IMR-90 (cell line): ENCODE measurements at regions of chr19 and their contacts with region 1.

Region 1: GRCh38 chr19:31214086-31214485 is 135.2 kb downstream of the TSHZ3 start:
- DNase-seq: peak; percentile 100
- ATAC-seq: peak; percentile 95
- H3K4me3 ChIP-seq: no peak overlapping the region
- H3K27ac ChIP-seq: peak overlapping the region; percentile 90
- H3K4me1 ChIP-seq: peaks cover 14% of the 10 kb centered on the region
- H3K27me3 ChIP-seq: no peaks in the 10 kb centered on the region
- CTCF ChIP-seq: no peak
- POLR2A ChIP-seq: no peak; the same call in 1 of the 2 replicates
- RAD21 ChIP-seq: peak; percentile 41

Region 2: GRCh38 chr19:31139871-31140505 is 74.1 kb before region 1 on chr19:
- CTCF ChIA-PET with region 1: no interaction called
- POLR2A ChIA-PET with region 1: no interaction called
- dilution Hi-C with region 1: no loop called
- in situ Hi-C with region 1: no loop called
- intact Hi-C with region 1: loop called (anchors 2 kb)
- DNase-seq: peak; percentile 90
- ATAC-seq: peak; percentile 77
- H3K4me3 ChIP-seq: no peak overlapping the region
- H3K27ac ChIP-seq: peak overlapping the region; percentile 24
- H3K4me1 ChIP-seq: peaks cover 26% of the 10 kb centered on the region
- H3K27me3 ChIP-seq: no peaks in the 10 kb centered on the region
- CTCF ChIP-seq: no peak
- POLR2A ChIP-seq: no peak
- RAD21 ChIP-seq: no peak

Region 3: DNA sequence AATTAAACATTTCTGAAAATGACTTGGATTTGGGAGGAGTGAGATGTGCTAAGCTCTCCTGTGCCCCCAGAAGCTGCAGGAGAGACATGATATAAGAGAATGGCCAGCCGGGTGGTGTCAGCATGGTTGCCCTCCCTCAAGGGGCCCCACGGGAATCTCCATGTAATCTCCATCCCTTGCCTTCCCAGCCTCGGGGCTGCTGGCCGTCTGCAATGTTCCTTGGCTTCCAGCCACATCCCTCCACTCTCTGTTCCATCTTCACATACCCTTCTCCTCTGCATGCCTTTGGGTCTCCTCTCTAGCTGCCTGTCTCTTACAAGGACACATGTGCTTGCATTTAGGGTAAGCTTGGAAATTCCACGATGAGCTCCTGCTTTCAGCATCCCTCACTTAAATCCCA is 36.8 kb before region 1 on chr19:
- CTCF ChIA-PET with region 1: no interaction called
- POLR2A ChIA-PET with region 1: no interaction called
- dilution Hi-C with region 1: no loop called
- in situ Hi-C with region 1: no loop called
- intact Hi-C with region 1: no loop called
- DNase-seq: no peak
- ATAC-seq: no peak
- H3K4me3 ChIP-seq: no peak overlapping the region
- H3K27ac ChIP-seq: no peak overlapping the region
- H3K4me1 ChIP-seq: no peaks in the 10 kb centered on the region
- H3K27me3 ChIP-seq: no peaks in the 10 kb centered on the region
- CTCF ChIP-seq: no peak
- POLR2A ChIP-seq: no peak
- RAD21 ChIP-seq: no peak

Region 4: DNA sequence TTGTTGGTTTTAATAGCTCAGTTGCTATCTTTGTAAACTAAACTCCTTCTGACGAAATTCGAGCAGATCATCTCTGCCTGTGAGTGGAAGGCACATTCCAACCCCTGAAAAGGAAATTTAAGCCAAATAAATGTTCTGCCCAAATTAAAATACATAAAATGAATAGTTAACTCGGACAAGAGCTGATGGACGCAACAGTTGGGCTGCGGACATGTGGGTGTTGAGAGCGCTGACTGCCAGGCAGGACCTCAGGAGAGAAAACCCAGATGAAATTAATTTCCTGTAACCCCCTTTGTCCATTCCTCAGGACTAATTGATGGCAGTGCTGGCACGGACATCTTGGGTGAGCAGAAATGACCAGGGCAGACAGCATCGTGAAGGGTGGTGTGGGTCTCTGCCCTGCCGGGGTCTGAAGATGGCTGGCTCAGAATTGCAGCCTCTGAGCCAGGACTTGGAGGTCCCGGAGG is 48.7 kb after region 1 on chr19:
- CTCF ChIA-PET with region 1: no interaction called
- POLR2A ChIA-PET with region 1: no interaction called
- dilution Hi-C with region 1: no loop called
- in situ Hi-C with region 1: no loop called
- intact Hi-C with region 1: no loop called
- DNase-seq: peak; percentile 34
- ATAC-seq: peak; percentile 64
- H3K4me3 ChIP-seq: no peak overlapping the region
- H3K27ac ChIP-seq: peak overlapping the region; percentile 4
- H3K4me1 ChIP-seq: peaks cover 11% of the 10 kb centered on the region
- H3K27me3 ChIP-seq: no peaks in the 10 kb centered on the region
- CTCF ChIP-seq: no peak
- POLR2A ChIP-seq: no peak
- RAD21 ChIP-seq: no peak